ENCODE measurements at regions of chr10 and their contacts with region 1.

Region 1: GRCh38 chr10:70363971-70364771 is 18.3 kb downstream of the LRRC20 start:
- DNase-seq: peak; percentile 81
- H3K4me3 Mint-ChIP-seq: peak overlapping the region; percentile 39
- H3K27ac Mint-ChIP-seq: no peak overlapping the region
- H3K4me1 Mint-ChIP-seq: peaks cover 14% of the 10 kb centered on the region
- H3K27me3 Mint-ChIP-seq: no peaks in the 10 kb centered on the region

Region 2: DNA sequence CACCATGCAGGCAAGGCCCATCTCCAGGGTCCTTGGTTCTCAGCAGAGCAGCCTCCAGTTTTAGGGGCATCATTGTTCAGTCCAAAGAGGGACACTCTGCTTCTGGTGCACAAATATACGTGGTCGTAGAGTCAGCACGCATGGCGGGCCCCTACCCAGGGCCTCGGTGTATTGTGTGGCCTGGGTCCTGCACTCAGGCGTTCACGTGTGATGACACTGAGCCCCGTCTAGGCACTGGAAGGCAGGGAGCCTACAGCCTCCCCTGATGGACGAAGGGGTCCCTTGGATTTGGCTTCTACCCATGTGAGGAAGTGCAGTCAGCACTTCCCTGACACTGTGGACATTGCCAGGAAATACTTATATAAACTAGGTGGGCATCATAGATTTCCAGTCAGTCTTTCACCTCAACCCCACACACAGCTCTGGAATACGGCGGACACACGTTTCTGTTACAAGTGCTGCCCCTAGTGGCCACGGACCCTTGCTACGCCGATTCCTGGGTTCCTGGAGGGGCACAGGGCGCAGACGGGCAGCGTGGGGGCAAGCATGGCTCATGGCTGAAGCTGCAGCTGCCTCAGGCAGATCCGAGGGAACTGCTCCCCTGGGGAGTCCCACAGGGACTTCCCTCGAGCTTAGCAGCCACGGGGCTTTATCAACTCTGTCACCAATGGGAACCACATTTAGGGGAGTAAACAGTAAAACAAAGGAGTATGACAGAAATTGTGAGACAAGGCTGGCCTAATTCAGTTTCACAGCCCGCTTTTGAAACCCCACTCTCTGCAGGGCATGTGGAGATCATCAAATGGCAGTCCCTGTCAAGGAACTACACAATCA is 257.0 kb before region 1 on chr10:
- intact Hi-C with region 1: no loop called
- DNase-seq: no peak
- H3K4me3 Mint-ChIP-seq: no peak overlapping the region
- H3K27ac Mint-ChIP-seq: no peak overlapping the region
- H3K4me1 Mint-ChIP-seq: no peaks in the 10 kb centered on the region
- H3K27me3 Mint-ChIP-seq: no peaks in the 10 kb centered on the region

Region 3: GRCh38 chr10:70221030-70221429 is 143.1 kb before region 1 on chr10:
- intact Hi-C with region 1: loop called (anchors 1 kb)
- DNase-seq: no peak
- H3K4me3 Mint-ChIP-seq: peak overlapping the region; percentile 28
- H3K27ac Mint-ChIP-seq: no peak overlapping the region
- H3K4me1 Mint-ChIP-seq: peaks cover 27% of the 10 kb centered on the region
- H3K27me3 Mint-ChIP-seq: no peaks in the 10 kb centered on the region